Transverse colon (tissue), 4 donors: ENCODE measurements at regions of chr14 and their contacts with region 1.

Region 1: DNA sequence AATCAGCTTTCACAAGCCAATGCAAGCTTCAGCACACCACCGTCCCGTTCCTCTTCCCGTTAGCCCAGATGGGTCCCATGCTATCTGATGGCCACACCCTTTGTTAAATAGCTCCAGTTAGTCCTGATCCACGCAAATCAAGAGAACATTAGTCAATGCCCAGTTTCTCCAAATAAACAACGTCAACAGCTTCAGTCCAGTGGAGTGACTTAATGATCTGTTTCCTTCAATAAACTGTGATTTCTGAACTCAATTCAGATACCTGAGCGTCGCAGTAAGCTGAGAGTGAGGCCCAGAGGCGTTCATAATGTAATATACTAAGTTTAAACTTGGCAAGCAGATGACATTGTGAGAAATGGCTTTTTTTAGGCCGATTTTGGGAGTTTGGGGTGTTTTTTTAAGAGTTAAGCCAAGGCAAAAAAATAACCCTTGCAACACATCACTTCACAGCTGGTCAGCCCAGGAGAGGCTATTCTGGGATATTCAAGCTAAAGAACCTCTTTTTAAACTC is 112.3 kb downstream of the ZFP36L1 start:
- DNase-seq: no peak
- H3K4me3 ChIP-seq: no peak overlapping the region
- H3K27ac ChIP-seq: peak overlapping the region; percentile 77 to 85 (median 82)
- H3K4me1 ChIP-seq: peaks cover 12 to 50% (median 32%) of the 10 kb centered on the region in 4 donors
- H3K27me3 ChIP-seq: no peaks in the 10 kb centered on the region
- CTCF ChIP-seq: no peak
- EP300 ChIP-seq: no peak
- POLR2A ChIP-seq: no peak

Region 2: GRCh38 chr14:68637106-68638021 is 43.2 kb before region 1 on chr14:
- in situ Hi-C with region 1: no loop called
- intact Hi-C with region 1: loop called (anchors 1 kb)
- DNase-seq: no peak
- H3K4me3 ChIP-seq: no peak overlapping the region
- H3K27ac ChIP-seq: peak overlapping the region; percentile 74 to 80 (median 78)
- H3K4me1 ChIP-seq: peaks cover 16 to 45% (median 32%) of the 10 kb centered on the region in 4 donors
- H3K27me3 ChIP-seq: no peaks in the 10 kb centered on the region
- CTCF ChIP-seq: no peak
- EP300 ChIP-seq: no peak
- POLR2A ChIP-seq: no peak

Region 3: GRCh38 chr14:69879175-69880043 is 1198.8 kb after region 1 on chr14 and contains the start of gene SMOC1:
- in situ Hi-C with region 1: no loop called
- intact Hi-C with region 1: no loop called
- DNase-seq: peak; percentile 65
- H3K4me3 ChIP-seq: peak within 1 kb of the TSS in 2 of 4 donors; percentile 18 to 25
- H3K27ac ChIP-seq: no peak within 1 kb of the TSS
- H3K4me1 ChIP-seq: peaks cover 0 to 5% (median 0%) of the 10 kb centered on the region in 4 donors
- H3K27me3 ChIP-seq: peaks cover 63% of the 10 kb centered on the region
- CTCF ChIP-seq: no peak
- EP300 ChIP-seq: no peak
- POLR2A ChIP-seq: no peak
- total RNA-seq, gene SMOC1: 0.82 to 1.3 TPM in 2 of 4 donors, not detected in the others